H1 (cell line): ENCODE measurements at regions of chr22 and their contacts with region 1.

Region 1: GRCh38 chr22:36239401-36240171 is at the start of gene APOL2:
- DNase-seq: peak; percentile 77 to 83
- H3K4me3 ChIP-seq: peak within 1 kb of the TSS; percentile 35 to 67 (median 40)
- H3K27ac ChIP-seq: peak within 1 kb of the TSS; percentile 47; the same call in 1 of the 2 replicates
- H3K4me1 ChIP-seq: peaks cover 0 to 14% (median 9%) of the 10 kb centered on the region in 4 experiments; a peak in 6 of 7 replicates
- H3K27me3 ChIP-seq: no peaks in the 10 kb centered on the region
- CTCF ChIP-seq: peak; percentile 65 to 86 (median 82)
- EP300 ChIP-seq: no peak
- POLR2A ChIP-seq: peak; percentile 34 to 61; a peak in 2 of 3 replicates
- RAD21 ChIP-seq: peak; percentile 51 to 58
- total RNA-seq, gene APOL2: 11.0 and 12.0 TPM in 2 replicates

Region 2: DNA sequence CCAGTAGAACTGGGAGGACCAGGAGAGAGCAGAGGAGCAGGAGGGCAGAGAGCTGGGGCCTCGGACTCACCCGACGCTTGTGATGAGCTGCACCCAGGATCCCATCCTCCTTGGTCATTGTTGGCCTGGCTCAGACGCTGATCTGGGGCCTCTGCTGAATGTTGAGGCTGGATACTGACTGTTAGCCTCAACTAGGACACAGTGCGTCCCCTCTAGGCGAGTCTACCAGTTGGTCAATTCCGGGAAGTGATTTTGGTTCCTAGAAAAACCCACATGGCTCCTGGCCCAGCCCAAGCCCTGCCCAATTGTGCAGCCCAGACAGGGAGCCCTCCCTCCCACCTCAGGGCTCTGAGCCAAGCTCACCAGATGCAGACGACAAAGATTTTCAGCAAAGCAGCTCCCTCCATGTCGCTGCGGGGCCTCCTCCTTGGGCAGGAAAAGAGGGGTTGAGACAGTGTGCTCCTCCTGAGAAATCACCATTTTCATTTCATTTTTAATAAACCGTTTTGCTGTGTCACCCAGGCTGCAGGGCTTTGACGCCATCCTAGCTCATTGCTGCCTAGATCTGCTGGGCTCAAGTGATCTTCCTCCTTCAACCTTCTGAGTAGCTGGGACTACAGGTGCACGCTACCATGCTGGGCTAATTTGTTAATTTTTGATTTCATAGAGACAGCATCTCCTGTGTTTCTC is 37.8 kb before region 1 on chr22 and contains the start of gene APOL4:
- CTCF ChIA-PET with region 1: interaction called, 12 read pairs
- POLR2A ChIA-PET with region 1: interaction called, 3 read pairs
- DNase-seq: no peak
- H3K4me3 ChIP-seq: no peak within 1 kb of the TSS
- H3K27ac ChIP-seq: no peak within 1 kb of the TSS
- H3K4me1 ChIP-seq: peaks cover 0 to 10% (median 6%) of the 10 kb centered on the region in 4 experiments; a peak in 6 of 7 replicates
- H3K27me3 ChIP-seq: no peaks in the 10 kb centered on the region
- CTCF ChIP-seq: no peak
- EP300 ChIP-seq: no peak
- POLR2A ChIP-seq: no peak
- RAD21 ChIP-seq: no peak
- total RNA-seq, gene APOL4: not detected in 2 replicates

Region 3: DNA sequence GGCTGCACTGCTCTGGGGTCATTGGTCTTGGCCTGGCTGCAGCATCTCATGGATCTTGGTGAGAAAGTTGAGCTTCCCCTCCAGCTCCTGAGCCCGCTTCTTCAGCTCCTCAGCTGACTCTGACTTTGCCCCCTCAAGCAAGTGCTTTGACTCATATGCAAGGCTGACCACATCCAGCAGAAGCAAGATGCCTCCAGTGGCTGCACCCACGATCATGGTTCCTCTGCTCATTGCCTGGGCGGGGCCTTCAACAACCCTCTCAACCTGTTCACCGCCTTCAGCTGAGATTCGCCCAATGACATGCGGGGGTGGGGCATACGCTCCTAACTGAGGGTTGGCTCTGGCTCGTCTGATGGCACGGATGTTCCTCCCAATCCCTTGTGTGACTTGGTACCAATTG is 12.2 kb before region 1 on chr22:
- CTCF ChIA-PET with region 1: interaction called, 25 read pairs
- POLR2A ChIA-PET with region 1: interaction called, 5 read pairs
- DNase-seq: no peak
- H3K4me3 ChIP-seq: no peak overlapping the region
- H3K27ac ChIP-seq: no peak overlapping the region
- H3K4me1 ChIP-seq: peaks cover 0 to 3% (median 0%) of the 10 kb centered on the region in 4 experiments; a peak in 1 of 7 replicates
- H3K27me3 ChIP-seq: no peaks in the 10 kb centered on the region
- CTCF ChIP-seq: no peak
- EP300 ChIP-seq: no peak
- POLR2A ChIP-seq: no peak
- RAD21 ChIP-seq: no peak

Region 4: DNA sequence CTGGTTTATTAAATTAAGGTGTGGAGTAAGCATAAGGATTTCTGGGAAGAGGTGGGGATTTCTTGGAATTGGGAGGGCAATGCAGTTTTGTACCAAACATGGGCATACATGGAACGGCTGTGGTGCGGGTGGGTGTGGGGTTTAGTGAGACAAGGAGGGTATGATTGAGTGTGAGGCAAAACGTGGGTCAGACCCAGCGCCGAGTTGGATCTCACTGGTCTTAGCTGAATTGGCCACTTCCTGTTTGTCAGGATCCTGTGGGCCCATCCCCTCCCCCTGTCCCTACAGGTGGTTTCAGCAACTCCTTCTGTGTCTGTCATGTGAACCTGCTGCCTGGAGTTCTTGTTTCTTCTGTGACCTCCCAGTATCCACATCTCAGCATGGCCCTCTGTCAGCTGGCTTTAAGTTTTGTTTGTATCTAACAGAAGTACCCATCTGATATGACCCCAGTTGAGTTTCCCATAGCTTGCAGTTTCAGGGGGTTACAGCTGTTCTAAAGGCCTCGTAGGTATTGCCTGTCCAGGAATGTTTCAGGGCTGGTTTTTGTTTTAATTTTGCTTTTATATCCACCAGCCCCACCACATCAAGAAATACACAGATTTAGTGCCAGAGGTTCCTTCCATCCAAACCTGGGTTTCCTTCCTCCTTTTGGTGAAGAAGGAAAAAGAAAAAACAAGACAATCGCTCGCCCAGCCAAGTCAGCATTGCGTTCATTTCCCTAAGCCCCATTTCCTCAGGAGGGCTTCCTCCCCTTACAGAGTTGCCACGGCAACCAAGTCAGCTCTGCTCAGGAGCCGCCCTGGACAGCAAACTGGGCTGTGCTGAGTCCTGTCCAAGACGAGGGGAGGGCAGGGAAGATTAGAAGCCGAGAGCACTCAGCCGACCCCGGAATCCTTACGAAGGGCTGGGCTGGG is 19.4 kb after region 1 on chr22:
- CTCF ChIA-PET with region 1: interaction called, 30 read pairs
- POLR2A ChIA-PET with region 1: interaction called, 8 read pairs
- DNase-seq: peak in 1 of 2 experiments; percentile 56
- H3K4me3 ChIP-seq: peak overlapping the region in 1 of 4 experiments; percentile 31; a peak in 1 of 8 replicates
- H3K27ac ChIP-seq: peak overlapping the region; percentile 47; the same call in 1 of the 2 replicates
- H3K4me1 ChIP-seq: peaks cover 7 to 14% (median 10%) of the 10 kb centered on the region in 4 experiments
- H3K27me3 ChIP-seq: no peaks in the 10 kb centered on the region
- CTCF ChIP-seq: no peak
- EP300 ChIP-seq: no peak
- POLR2A ChIP-seq: peak in 1 of 2 experiments; percentile 27; a peak in 1 of 3 replicates
- RAD21 ChIP-seq: no peak

Region 5: GRCh38 chr22:36486619-36487384 is 247.2 kb after region 1 on chr22:
- CTCF ChIA-PET with region 1: interaction called, 13 read pairs
- POLR2A ChIA-PET with region 1: interaction called, 4 read pairs
- DNase-seq: peak in 1 of 2 experiments; percentile 85
- H3K4me3 ChIP-seq: no peak overlapping the region
- H3K27ac ChIP-seq: no peak overlapping the region
- H3K4me1 ChIP-seq: no peaks in the 10 kb centered on the region; a peak in 1 of 7 replicates
- H3K27me3 ChIP-seq: peaks cover 0 to 7% (median 5%) of the 10 kb centered on the region in 4 experiments; a peak in 5 of 7 replicates
- CTCF ChIP-seq: peak; percentile 70 to 86 (median 83)
- EP300 ChIP-seq: no peak
- POLR2A ChIP-seq: no peak
- RAD21 ChIP-seq: peak; percentile 83 to 91